HCT116 (cell line): ENCODE measurements at regions of chr20 and their contacts with region 1.

Region 1: GRCh38 chr20:24684956-24685691 is 215.7 kb downstream of the SYNDIG1 start:
- DNase-seq: no peak
- ATAC-seq: no peak
- H3K4me3 ChIP-seq: no peak overlapping the region
- H3K27ac ChIP-seq: no peak overlapping the region
- H3K4me1 ChIP-seq: no peaks in the 10 kb centered on the region
- H3K27me3 ChIP-seq: peaks cover 3% of the 10 kb centered on the region; the same call in 1 of the 2 replicates
- CTCF ChIP-seq: no peak
- POLR2A ChIP-seq: no peak
- RAD21 ChIP-seq: no peak

Region 2: DNA sequence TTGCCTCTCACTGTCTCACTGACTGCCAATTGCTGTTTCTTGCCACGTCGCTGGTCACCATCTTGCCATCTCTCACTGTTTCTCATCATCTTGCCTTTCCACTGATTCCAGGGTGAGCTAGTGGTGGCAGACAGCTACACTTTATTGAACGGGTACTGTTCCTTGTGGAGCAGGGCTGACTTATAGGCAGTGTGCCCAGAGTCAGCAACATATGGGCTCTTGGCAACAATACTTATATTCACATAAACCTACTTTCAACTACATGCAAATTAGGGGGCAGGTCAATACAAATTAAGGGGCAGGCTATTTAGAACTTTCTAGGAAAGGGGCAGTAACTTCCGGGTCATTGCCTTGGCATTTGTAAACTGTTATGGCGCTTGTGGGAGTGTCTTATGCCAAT is 401.9 kb before region 1 on chr20:
- CTCF ChIA-PET with region 1: no interaction called
- POLR2A ChIA-PET with region 1: no interaction called
- RAD21 ChIA-PET with region 1: no interaction called
- intact Hi-C with region 1: loop called (anchors 5 kb)
- DNase-seq: no peak
- ATAC-seq: no peak
- H3K4me3 ChIP-seq: no peak overlapping the region
- H3K27ac ChIP-seq: no peak overlapping the region
- H3K4me1 ChIP-seq: no peaks in the 10 kb centered on the region
- H3K27me3 ChIP-seq: no peaks in the 10 kb centered on the region
- CTCF ChIP-seq: no peak
- POLR2A ChIP-seq: no peak
- RAD21 ChIP-seq: no peak